ENCODE measurements at regions of chr11 and their contacts with region 1.

Region 1: DNA sequence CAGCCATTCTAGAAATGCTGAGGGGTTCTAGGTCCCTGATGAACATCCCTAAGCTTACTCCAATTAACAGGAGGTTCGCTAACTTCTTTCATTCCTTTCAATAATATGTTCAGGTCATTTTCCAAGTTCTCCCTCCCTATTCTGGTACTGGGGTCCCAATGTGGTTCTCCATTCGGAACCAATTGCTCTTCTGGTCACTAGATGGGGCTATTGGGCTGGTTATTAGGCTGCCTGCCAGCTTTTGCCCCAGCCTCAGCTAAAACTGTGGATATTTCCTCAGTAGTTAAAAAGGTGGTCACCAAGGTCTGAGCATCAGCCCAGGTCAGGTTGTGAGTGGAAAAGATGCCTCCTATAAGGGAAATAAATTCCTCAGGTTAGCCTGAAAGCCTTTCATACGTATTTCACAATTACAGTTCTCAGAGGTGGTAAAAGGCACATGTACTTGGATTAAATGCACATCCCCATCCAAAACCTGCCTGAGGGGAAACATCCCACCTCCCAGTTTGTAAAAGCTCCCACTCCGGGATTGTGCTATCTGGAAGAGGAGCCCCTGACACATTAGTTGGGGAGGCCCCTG is 161.1 kb upstream of the CCDC179 start:
- DNase-seq: no peak
- ATAC-seq: peak; percentile 77
- H3K4me3 ChIP-seq: no peak overlapping the region
- H3K27ac ChIP-seq: no peak overlapping the region
- H3K4me1 ChIP-seq: no peaks in the 10 kb centered on the region
- H3K27me3 ChIP-seq: no peaks in the 10 kb centered on the region
- CTCF ChIP-seq: peak; percentile 65 to 81 (median 68)
- EP300 ChIP-seq: no peak
- POLR2A ChIP-seq: no peak
- RAD21 ChIP-seq: peak; percentile 69

Region 2: DNA sequence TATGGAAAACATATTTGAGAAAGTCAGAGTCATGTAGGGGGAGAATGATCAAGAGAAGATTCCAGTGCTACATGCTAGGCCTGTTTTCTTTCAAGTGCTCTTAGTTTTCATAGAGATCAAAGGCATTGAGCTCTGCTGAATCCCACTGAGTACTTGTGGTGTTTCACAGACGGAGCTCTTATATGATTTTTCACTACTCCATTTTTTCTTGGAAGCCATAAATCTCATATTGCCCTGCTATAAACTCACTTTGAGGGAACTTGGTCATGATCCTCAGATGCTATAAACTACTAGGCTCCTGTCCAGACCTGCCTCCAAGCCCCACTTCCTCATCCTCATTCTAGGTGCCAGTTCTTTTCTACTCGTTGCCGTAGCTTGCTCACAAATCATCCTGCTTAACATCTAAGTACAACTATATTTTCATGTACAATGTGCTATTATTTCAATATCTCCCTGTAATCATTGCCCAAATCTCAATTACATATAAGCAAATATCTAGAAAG is 19.7 kb after region 1 on chr11:
- CTCF ChIA-PET with region 1: interaction called, 50 read pairs
- POLR2A ChIA-PET with region 1: interaction called, 3 read pairs
- RAD21 ChIA-PET with region 1: interaction called, 5 read pairs
- SMC1A ChIA-PET with region 1: interaction called, 8 read pairs
- in situ Hi-C with region 1: no loop called
- intact Hi-C with region 1: no loop called
- DNase-seq: no peak
- ATAC-seq: no peak
- H3K4me3 ChIP-seq: no peak overlapping the region
- H3K27ac ChIP-seq: no peak overlapping the region
- H3K4me1 ChIP-seq: no peaks in the 10 kb centered on the region
- H3K27me3 ChIP-seq: no peaks in the 10 kb centered on the region
- CTCF ChIP-seq: no peak
- EP300 ChIP-seq: no peak
- POLR2A ChIP-seq: no peak
- RAD21 ChIP-seq: no peak

Region 3: GRCh38 chr11:23078289-23078971 is 57.1 kb after region 1 on chr11:
- CTCF ChIA-PET with region 1: interaction called, 6 read pairs
- POLR2A ChIA-PET with region 1: interaction called, 3 read pairs
- RAD21 ChIA-PET with region 1: interaction called, 35 read pairs
- SMC1A ChIA-PET with region 1: interaction called, 28 read pairs
- in situ Hi-C with region 1: no loop called
- intact Hi-C with region 1: no loop called
- DNase-seq: no peak
- ATAC-seq: peak; percentile 90
- H3K4me3 ChIP-seq: no peak overlapping the region
- H3K27ac ChIP-seq: no peak overlapping the region
- H3K4me1 ChIP-seq: no peaks in the 10 kb centered on the region
- H3K27me3 ChIP-seq: no peaks in the 10 kb centered on the region
- CTCF ChIP-seq: no peak
- EP300 ChIP-seq: peak; percentile 21 to 67; a peak in 1 of 4 replicates
- POLR2A ChIP-seq: no peak
- RAD21 ChIP-seq: no peak

Region 4: GRCh38 chr11:23233075-23233474 is 211.7 kb after region 1 on chr11:
- CTCF ChIA-PET with region 1: no interaction called
- POLR2A ChIA-PET with region 1: no interaction called
- RAD21 ChIA-PET with region 1: interaction called, 3 read pairs
- SMC1A ChIA-PET with region 1: interaction called, 6 read pairs
- in situ Hi-C with region 1: no loop called
- intact Hi-C with region 1: loop called (anchors 10 kb)
- DNase-seq: no peak
- ATAC-seq: no peak
- H3K4me3 ChIP-seq: no peak overlapping the region
- H3K27ac ChIP-seq: no peak overlapping the region
- H3K4me1 ChIP-seq: no peaks in the 10 kb centered on the region
- H3K27me3 ChIP-seq: no peaks in the 10 kb centered on the region
- CTCF ChIP-seq: no peak
- EP300 ChIP-seq: no peak
- POLR2A ChIP-seq: no peak
- RAD21 ChIP-seq: no peak

Region 5: DNA sequence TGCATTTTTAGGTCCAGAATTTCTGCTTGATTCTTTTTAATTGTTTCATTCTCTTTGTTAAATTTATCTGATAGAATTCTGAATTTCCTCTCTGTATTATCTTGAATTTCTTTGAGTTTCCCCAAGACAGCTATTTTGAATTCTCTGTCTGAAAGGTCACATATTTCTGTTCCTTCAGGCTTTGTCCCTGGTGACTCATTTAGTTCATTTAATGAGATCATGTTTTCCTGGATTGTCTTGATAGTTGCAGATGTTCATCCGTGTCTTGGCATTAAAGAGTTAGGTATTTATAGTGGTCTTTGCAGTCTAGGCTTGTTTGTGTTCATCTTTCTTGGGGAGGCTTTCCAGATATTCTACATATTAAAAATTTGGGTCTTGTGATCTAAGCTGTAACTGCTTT is 533.7 kb after region 1 on chr11:
- CTCF ChIA-PET with region 1: interaction called, 11 read pairs
- POLR2A ChIA-PET with region 1: no interaction called
- RAD21 ChIA-PET with region 1: interaction called, 3 read pairs
- SMC1A ChIA-PET with region 1: no interaction called
- in situ Hi-C with region 1: no loop called
- intact Hi-C with region 1: no loop called
- DNase-seq: no peak
- ATAC-seq: no peak
- H3K4me3 ChIP-seq: no peak overlapping the region
- H3K27ac ChIP-seq: no peak overlapping the region
- H3K4me1 ChIP-seq: no peaks in the 10 kb centered on the region
- H3K27me3 ChIP-seq: no peaks in the 10 kb centered on the region
- CTCF ChIP-seq: no peak
- EP300 ChIP-seq: no peak
- POLR2A ChIP-seq: no peak
- RAD21 ChIP-seq: no peak